Common myeloid progenitor, CD34-positive (primary cell): ENCODE measurements at regions of chr19 and their contacts with region 1.

Region 1: DNA sequence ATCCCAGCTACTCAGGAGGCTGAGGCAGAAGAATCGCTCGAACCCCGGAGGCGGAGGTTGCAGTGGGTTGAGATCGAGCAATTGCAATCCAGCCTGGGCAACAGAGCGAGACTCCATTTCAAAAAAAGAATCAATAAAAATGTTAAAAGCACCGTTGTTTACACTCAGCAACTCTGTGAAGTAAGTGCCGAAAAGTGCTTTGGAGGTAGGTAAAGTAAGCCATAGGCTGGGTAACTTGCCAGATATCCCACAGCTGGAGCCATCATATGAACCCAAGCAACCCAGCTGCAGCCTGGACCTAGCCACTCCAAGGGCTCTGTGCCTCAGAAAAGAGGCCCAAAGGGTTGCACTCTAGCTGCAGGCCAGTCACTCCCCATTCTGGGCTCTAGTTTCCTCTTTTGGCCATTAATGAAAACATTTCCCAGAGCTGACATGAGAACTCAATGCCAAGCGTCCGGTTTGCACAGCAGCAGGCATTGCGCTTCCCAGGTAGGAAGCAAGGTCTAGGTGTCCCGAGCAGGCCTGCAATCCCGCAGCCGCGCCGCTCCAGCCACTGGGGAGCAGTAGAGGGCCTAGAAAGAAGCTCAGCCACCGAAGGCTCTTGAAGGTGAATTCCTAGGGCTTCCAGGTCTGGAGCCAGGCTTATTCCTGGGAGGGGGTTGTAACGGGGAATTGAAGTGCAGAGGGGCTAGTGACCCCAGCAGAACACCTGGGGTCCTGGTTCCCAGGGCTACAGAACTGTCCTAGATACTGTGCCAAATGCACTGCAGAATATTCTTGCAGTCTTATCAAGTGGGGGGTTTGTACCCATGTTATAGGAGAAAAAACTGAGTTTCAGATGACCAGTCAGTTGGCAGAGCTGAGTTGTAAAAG is 4.1 kb upstream of the CD79A start:
- DNase-seq: peak in 2 of 3 donors; percentile 64 to 67
- H3K4me3 ChIP-seq: peak overlapping the region in 1 of 7 experiments; percentile 36
- H3K27ac ChIP-seq: peak overlapping the region in 1 of 2 experiments; percentile 1
- H3K4me1 ChIP-seq: peaks cover 18 to 91% (median 80%) of the 10 kb centered on the region in 4 experiments
- H3K27me3 ChIP-seq: no peaks in the 10 kb centered on the region

Region 2: DNA sequence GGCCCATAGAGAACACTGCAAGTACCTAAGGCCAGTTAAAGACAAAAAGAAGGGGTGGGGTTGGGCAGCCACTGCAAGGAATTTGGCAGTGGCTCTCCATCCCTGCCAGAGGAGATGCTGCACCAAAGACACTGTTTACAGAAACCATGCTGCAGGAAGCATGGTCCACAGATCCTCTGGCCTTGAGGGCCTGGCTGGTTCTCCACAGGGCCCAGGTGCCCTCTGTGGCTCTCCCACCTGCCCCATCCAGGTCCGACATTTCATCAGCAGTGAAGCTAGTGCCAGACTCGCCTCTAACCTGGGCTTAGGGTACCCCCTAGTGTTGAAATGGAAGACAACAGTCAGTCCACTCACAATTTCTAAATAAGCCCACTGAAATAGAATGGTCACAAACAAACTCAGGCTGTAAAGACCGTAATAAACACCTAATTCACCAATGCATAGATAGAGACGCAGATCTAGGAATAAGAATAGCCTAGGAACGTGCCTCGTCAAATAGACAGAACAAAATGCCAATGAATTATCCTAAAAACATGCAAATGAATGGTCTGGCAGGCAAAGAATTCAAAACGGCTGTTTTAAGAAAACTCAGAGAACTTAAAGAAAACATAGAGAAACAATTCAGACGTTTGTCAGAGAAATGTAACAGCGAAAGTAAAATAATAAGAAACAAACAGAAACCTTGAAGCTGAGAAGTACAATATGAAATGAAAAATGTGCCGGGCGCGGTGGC is 51.8 kb before region 1 on chr19:
- CTCF ChIA-PET with region 1: no interaction called
- POLR2A ChIA-PET with region 1: no interaction called
- DNase-seq: peak; percentile 67 to 84 (median 76)
- H3K4me3 ChIP-seq: no peak overlapping the region
- H3K27ac ChIP-seq: no peak overlapping the region
- H3K4me1 ChIP-seq: peaks cover 0 to 2% (median 0%) of the 10 kb centered on the region in 4 experiments
- H3K27me3 ChIP-seq: no peaks in the 10 kb centered on the region

Region 3: DNA sequence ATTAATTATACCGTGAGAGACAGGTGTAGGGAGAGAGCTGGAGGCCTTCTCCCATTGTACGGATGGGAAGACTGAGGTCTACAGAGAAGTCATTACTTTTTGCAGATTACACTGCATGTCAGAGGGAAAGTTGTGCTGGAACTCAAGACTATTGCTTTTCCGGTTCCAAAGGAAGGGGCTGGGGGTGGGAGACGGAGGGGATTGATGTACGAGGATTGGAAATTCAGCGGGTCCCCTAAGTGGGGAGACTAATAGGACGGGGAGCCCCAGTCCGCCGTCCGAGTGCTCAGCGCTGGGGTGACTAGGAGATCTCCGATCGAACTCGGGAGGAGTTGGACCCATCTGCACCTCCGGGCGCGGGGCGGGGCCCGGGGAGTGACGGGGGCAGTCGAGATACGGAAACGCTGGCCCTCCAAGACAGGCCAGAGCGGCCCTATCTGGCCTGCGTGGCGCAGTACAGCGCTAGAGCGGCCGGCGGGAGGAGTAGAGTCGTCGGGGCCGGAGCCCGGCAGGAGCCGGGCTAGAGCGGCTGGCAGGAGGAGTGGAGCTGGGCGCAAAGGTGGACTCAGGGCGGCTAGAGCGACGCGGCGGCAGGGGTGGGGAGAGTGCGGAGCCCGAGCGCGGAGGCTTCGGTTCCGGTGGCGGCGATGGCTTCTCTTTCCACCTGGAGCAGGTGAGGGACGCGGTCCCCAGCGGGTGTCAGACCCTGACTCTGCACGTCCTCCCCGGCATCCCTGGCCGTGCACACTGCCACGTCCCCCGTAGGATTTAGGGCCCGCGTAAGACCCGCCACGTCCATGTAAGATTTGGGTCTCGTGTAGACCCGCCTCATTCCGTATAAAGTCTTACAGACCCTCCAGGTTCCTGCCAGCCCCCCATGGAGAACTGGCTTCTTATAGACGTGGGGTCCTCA is 11.1 kb after region 1 on chr19:
- CTCF ChIA-PET with region 1: interaction called, 82 read pairs
- POLR2A ChIA-PET with region 1: interaction called, 8 read pairs
- DNase-seq: peak; percentile 95 to 97 (median 96)
- H3K4me3 ChIP-seq: peak overlapping the region; percentile 64 to 96 (median 87)
- H3K27ac ChIP-seq: peak overlapping the region; percentile 72 to 89
- H3K4me1 ChIP-seq: peaks cover 17 to 75% (median 65%) of the 10 kb centered on the region in 4 experiments
- H3K27me3 ChIP-seq: no peaks in the 10 kb centered on the region

Region 4: GRCh38 chr19:41936416-41936850 is 63.4 kb after region 1 on chr19:
- CTCF ChIA-PET with region 1: interaction called, 11 read pairs
- POLR2A ChIA-PET with region 1: no interaction called
- DNase-seq: no peak
- H3K4me3 ChIP-seq: no peak overlapping the region
- H3K27ac ChIP-seq: no peak overlapping the region
- H3K4me1 ChIP-seq: peaks cover 0 to 43% (median 29%) of the 10 kb centered on the region in 4 experiments
- H3K27me3 ChIP-seq: peaks cover 0 to 24% (median 6%) of the 10 kb centered on the region in 5 experiments

Region 5: GRCh38 chr19:41951686-41952172 is 78.7 kb after region 1 on chr19:
- CTCF ChIA-PET with region 1: interaction called, 37 read pairs
- POLR2A ChIA-PET with region 1: no interaction called
- DNase-seq: peak; percentile 67 to 79 (median 68)
- H3K4me3 ChIP-seq: no peak overlapping the region
- H3K27ac ChIP-seq: no peak overlapping the region
- H3K4me1 ChIP-seq: peaks cover 0 to 5% (median 2%) of the 10 kb centered on the region in 4 experiments
- H3K27me3 ChIP-seq: no peaks in the 10 kb centered on the region